ENCODE measurements at regions of chr16 and their contacts with region 1.

Region 1: GRCh38 chr16:11639925-11640899 is 28.0 kb upstream of the SNN start:
- DNase-seq: peak; percentile 87
- ATAC-seq: peak; percentile 94

Region 2: DNA sequence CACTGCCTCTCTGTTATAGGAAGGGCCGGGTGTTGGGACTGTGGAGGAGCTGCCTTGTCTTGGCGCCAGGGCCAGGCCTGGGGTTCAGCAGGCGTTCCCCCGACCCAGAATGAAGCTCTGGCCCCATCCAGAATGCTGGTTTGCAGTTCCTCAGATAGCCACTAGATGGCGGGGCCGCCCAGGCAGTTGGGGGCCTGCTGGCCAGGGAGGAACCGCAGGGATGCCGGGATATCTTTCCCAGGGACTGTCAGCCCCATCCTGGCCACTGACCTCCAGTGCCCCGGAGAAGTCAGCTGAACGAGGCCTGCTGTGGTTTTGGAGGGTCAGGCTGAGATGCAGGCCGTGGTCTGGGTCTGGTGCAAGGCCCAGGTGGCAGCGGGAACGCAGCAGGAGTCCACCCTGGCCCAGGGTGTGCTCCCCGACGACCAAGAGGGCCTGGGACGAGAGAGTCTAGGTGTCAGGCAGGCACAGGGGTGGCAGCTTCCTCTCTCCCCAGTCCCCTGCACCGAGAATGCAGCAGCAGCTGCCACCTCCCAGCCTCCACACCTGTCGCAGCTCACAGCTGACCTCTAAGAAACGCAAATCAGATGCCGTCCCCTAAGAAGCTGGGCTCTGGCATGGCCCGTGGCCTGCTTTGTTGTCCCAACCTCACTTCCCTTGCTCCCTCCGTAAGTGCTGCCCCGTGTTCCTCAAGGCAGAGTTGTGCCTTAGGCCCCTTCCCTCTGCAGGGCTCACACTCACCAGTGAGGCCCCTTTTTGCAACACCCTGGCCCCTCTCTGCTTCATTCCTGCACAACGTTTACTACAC is 243.8 kb before region 1 on chr16:
- intact Hi-C with region 1: no loop called
- DNase-seq: peak; percentile 81
- ATAC-seq: peak; percentile 84

Region 3: GRCh38 chr16:11407047-11407982 is 232.9 kb before region 1 on chr16:
- intact Hi-C with region 1: loop called (anchors 5 kb)
- DNase-seq: peak; percentile 45
- ATAC-seq: peak; percentile 52

Region 4: DNA sequence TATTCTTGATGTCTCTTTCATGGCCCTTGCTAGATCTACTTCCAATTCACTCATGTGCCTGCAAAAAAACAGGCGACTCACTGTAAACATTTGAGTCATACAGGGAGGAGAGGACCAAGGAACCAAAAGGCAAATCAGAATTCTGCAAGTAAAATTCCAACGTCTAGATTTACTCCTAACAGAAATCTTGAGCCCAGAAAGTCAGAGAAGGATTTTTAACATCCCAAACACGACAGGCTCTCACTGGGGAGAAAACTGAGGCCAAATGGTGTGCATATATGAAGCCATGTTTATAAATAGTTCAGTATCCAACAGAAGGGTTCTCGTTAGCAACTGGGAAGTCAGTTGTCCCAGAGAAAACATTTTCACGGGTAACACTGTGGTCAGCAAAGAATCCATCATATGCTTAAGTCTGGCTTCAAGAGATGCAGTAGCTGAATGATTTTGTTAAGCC is 93.6 kb before region 1 on chr16:
- intact Hi-C with region 1: loop called (anchors 10 kb)
- DNase-seq: no peak
- ATAC-seq: no peak

Measured in left ventricle myocardium superior (tissue), 1 donor.